Activated B cell treated with CpG ODN at 0.5 μM for 24 hours (primary cell): ENCODE measurements at regions of chr22 and their contacts with region 1.

Region 1: GRCh38 chr22:19479357-19480172 is at the start of gene CDC45:
- DNase-seq: peak; percentile 79
- ATAC-seq: peak; percentile 93
- H3K4me3 Mint-ChIP-seq: peak within 1 kb of the TSS; percentile 93
- H3K27ac Mint-ChIP-seq: peak within 1 kb of the TSS; percentile 98
- H3K4me1 Mint-ChIP-seq: peaks cover 26% of the 10 kb centered on the region
- H3K27me3 Mint-ChIP-seq: no peaks in the 10 kb centered on the region
- CTCF ChIP-seq: no peak
- total RNA-seq, gene CDC45: 3.9 and 4.1 TPM in 2 replicates

Region 2: GRCh38 chr22:18954990-18955571 is 524.5 kb before region 1 on chr22:
- CTCF ChIA-PET with region 1: no interaction called
- POLR2A ChIA-PET with region 1: no interaction called
- intact Hi-C with region 1: no loop called
- DNase-seq: no peak
- ATAC-seq: no peak
- H3K4me3 Mint-ChIP-seq: no peak overlapping the region
- H3K27ac Mint-ChIP-seq: no peak overlapping the region
- H3K4me1 Mint-ChIP-seq: no peaks in the 10 kb centered on the region
- H3K27me3 Mint-ChIP-seq: peaks cover 3% of the 10 kb centered on the region
- CTCF ChIP-seq: no peak

Region 3: DNA sequence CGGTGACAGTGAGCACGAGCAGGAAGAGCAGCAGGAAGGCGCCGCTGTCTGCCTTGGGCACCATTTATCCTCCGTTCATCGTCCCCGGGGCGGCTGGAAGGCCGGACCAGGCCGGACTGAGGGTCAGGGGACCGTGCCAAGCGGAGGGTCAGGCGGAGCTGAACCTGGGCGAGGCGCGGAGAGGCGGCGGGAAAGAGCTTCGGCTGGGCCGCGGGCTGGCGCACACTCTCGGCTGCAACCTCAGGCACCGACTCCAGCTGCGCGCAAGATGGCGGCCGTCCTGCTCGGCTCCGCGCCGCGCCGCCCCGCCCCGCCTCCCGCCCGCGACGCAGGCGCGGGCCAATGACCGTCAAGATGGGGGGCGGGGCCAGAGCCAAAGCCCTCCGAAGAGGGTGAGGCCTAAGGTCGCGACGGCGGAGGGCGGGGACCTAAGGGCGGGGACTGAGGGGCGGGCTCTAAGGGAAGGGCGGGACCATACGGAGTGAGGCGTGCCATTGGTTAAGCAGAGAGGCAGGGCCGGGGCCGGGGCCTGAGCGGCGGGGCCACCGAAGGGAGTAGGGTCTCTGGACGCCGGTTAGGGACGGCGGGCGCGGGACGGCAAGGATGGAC is 357.3 kb before region 1 on chr22 and contains the start of gene DGCR2:
- CTCF ChIA-PET with region 1: no interaction called
- POLR2A ChIA-PET with region 1: interaction called, 3 read pairs
- intact Hi-C with region 1: loop called (anchors 5 kb)
- DNase-seq: peak; percentile 87
- ATAC-seq: peak; percentile 97
- H3K4me3 Mint-ChIP-seq: peak within 1 kb of the TSS; percentile 89
- H3K27ac Mint-ChIP-seq: peak within 1 kb of the TSS; percentile 74
- H3K4me1 Mint-ChIP-seq: peaks cover 50% of the 10 kb centered on the region
- H3K27me3 Mint-ChIP-seq: no peaks in the 10 kb centered on the region
- CTCF ChIP-seq: no peak
- total RNA-seq, gene DGCR2: 29.3 and 33.2 TPM in 2 replicates

Region 4: GRCh38 chr22:19178656-19179496 is 300.7 kb before region 1 on chr22 and contains the start of gene SLC25A1:
- CTCF ChIA-PET with region 1: interaction called, 21 read pairs
- POLR2A ChIA-PET with region 1: interaction called, 4 read pairs
- intact Hi-C with region 1: loop called (anchors 1 kb)
- DNase-seq: peak; percentile 84
- ATAC-seq: peak; percentile 75
- H3K4me3 Mint-ChIP-seq: peak within 1 kb of the TSS; percentile 85
- H3K27ac Mint-ChIP-seq: peak within 1 kb of the TSS; percentile 68
- H3K4me1 Mint-ChIP-seq: peaks cover 27% of the 10 kb centered on the region
- H3K27me3 Mint-ChIP-seq: no peaks in the 10 kb centered on the region
- CTCF ChIP-seq: no peak
- total RNA-seq, gene SLC25A1: 44.2 and 44.6 TPM in 2 replicates

Region 5: GRCh38 chr22:19291580-19292457 is 187.7 kb before region 1 on chr22 and contains the start of gene CLTCL1:
- CTCF ChIA-PET with region 1: no interaction called
- POLR2A ChIA-PET with region 1: interaction called, 4 read pairs
- intact Hi-C with region 1: loop called (anchors 2 kb)
- DNase-seq: peak; percentile 75
- ATAC-seq: peak; percentile 78
- H3K4me3 Mint-ChIP-seq: peak within 1 kb of the TSS; percentile 91
- H3K27ac Mint-ChIP-seq: peak within 1 kb of the TSS; percentile 83
- H3K4me1 Mint-ChIP-seq: peaks cover 18% of the 10 kb centered on the region
- H3K27me3 Mint-ChIP-seq: peaks cover 12% of the 10 kb centered on the region
- CTCF ChIP-seq: no peak
- total RNA-seq, gene CLTCL1: 2.7 and 5.0 TPM in 2 replicates

Region 6: DNA sequence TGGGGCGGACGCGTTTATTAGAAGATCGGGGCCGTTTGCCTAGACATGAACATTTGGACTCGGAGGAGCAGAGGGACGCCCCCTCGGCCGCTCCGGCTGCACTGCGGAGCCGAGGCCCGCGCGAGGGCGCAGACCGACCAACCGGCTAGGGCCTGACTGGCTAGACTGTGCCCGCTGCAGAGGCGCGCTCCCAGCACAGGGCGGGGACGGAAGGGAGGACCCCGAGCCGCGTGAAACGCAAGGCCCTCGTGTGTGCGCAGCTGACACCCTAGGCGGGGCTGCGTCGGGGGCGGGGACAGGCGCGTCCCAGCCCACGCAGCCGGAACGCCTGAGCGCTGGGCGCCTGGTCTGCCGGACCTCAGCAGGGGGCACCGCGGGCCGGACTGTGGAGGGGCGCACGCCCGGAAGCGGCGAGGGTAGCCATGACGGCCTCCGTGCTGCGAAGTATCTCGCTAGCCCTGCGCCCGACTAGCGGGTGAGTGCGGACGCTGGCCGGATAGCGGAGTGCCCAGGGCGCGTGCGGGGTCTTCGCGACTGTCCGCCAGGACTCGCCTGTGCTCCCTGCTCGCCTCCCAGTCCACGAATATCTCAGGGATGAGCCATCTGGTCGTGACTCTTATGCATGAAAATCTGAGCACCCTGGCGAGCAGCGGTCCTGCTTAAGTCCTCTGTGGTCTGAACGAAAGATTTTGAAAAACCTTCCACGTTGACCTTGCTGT is 47.3 kb before region 1 on chr22 and contains the start of gene MRPL40:
- CTCF ChIA-PET with region 1: no interaction called
- POLR2A ChIA-PET with region 1: interaction called, 18 read pairs
- intact Hi-C with region 1: loop called (anchors 1 kb)
- DNase-seq: peak; percentile 83
- ATAC-seq: peak; percentile 87
- H3K4me3 Mint-ChIP-seq: peak within 1 kb of the TSS; percentile 90
- H3K27ac Mint-ChIP-seq: peak within 1 kb of the TSS; percentile 91
- H3K4me1 Mint-ChIP-seq: peaks cover 59% of the 10 kb centered on the region
- H3K27me3 Mint-ChIP-seq: no peaks in the 10 kb centered on the region
- CTCF ChIP-seq: no peak
- total RNA-seq, gene MRPL40: 24.0 and 24.3 TPM in 2 replicates

Region 7: GRCh38 chr22:19619144-19620009 is 139.8 kb after region 1 on chr22:
- CTCF ChIA-PET with region 1: no interaction called
- POLR2A ChIA-PET with region 1: interaction called, 3 read pairs
- intact Hi-C with region 1: loop called (anchors 2 kb)
- DNase-seq: peak; percentile 31
- ATAC-seq: peak; percentile 43
- H3K4me3 Mint-ChIP-seq: peak overlapping the region; percentile 57
- H3K27ac Mint-ChIP-seq: peak overlapping the region; percentile 13
- H3K4me1 Mint-ChIP-seq: peaks cover 59% of the 10 kb centered on the region
- H3K27me3 Mint-ChIP-seq: peaks cover 20% of the 10 kb centered on the region
- CTCF ChIP-seq: no peak

Region 8: GRCh38 chr22:19717691-19718455 is 238.3 kb after region 1 on chr22:
- CTCF ChIA-PET with region 1: no interaction called
- POLR2A ChIA-PET with region 1: no interaction called
- intact Hi-C with region 1: loop called (anchors 5 kb)
- DNase-seq: peak; percentile 85
- ATAC-seq: peak; percentile 97
- H3K4me3 Mint-ChIP-seq: peak overlapping the region; percentile 78
- H3K27ac Mint-ChIP-seq: no peak overlapping the region
- H3K4me1 Mint-ChIP-seq: peaks cover 11% of the 10 kb centered on the region
- H3K27me3 Mint-ChIP-seq: peaks cover 44% of the 10 kb centered on the region
- CTCF ChIP-seq: peak; percentile 34